ENCODE measurements at regions of chr4 and their contacts with region 1.

Region 1: GRCh38 chr4:188960411-188961093 is 821.3 kb downstream of the TRIML1 start:
- DNase-seq: no peak
- H3K4me3 ChIP-seq: no peak overlapping the region
- H3K27ac ChIP-seq: no peak overlapping the region
- H3K4me1 ChIP-seq: no peaks in the 10 kb centered on the region
- H3K27me3 ChIP-seq: no peaks in the 10 kb centered on the region
- CTCF ChIP-seq: no peak
- EP300 ChIP-seq: no peak
- POLR2A ChIP-seq: no peak
- RAD21 ChIP-seq: no peak

Region 2: DNA sequence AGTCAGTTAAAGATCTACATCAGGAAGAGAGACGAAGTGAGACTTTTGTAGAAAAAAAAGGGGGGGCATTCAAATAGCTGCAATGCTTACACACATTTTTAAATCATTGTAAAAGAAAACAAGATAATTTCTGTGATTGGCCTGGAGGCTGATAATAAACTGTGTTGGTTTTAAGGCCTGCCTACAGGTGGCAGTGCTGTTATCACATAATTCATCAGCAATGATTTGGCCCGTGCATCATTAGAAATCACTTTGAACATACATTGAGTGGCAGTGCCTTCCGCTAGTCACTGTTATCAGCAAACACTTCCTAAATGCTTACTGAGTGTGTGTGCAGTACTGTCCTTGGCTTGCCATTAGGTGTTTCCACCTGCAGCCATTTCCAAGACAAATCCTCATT is 10.6 kb after region 1 on chr4:
- CTCF ChIA-PET with region 1: interaction called, 25 read pairs
- POLR2A ChIA-PET with region 1: no interaction called
- DNase-seq: no peak
- H3K4me3 ChIP-seq: no peak overlapping the region
- H3K27ac ChIP-seq: no peak overlapping the region
- H3K4me1 ChIP-seq: peaks cover 0 to 9% (median 4%) of the 10 kb centered on the region in 4 experiments; a peak in 5 of 7 replicates
- H3K27me3 ChIP-seq: no peaks in the 10 kb centered on the region
- CTCF ChIP-seq: peak in 2 of 3 experiments; percentile 32 to 53; a peak in 3 of 4 replicates
- EP300 ChIP-seq: no peak
- POLR2A ChIP-seq: no peak
- RAD21 ChIP-seq: peak; percentile 39 to 59

Measured in H1 (cell line).